ENCODE measurements at regions of chr11 and their contacts with region 1.

Region 1: GRCh38 chr11:61294717-61295595 is at the start of gene VWCE:
- DNase-seq: peak; percentile 35 to 78 (median 57)
- ATAC-seq: peak; percentile 92
- H3K4me3 ChIP-seq: peak within 1 kb of the TSS; percentile 73
- H3K4me3 Mint-ChIP-seq: peak within 1 kb of the TSS; percentile 72 to 86 (median 80)
- H3K27ac ChIP-seq: no peak within 1 kb of the TSS
- H3K27ac Mint-ChIP-seq: peak within 1 kb of the TSS in 1 of 9 donors; percentile 46
- H3K4me1 ChIP-seq: no peaks in the 10 kb centered on the region
- H3K4me1 Mint-ChIP-seq: peaks cover 15 to 40% (median 39%) of the 10 kb centered on the region in 7 donors
- H3K27me3 ChIP-seq: no peaks in the 10 kb centered on the region
- H3K27me3 Mint-ChIP-seq: peaks cover 0 to 25% (median 9%) of the 10 kb centered on the region in 5 donors
- total RNA-seq, gene VWCE: 0.16 to 3.8 (median 0.49) TPM

Region 2: GRCh38 chr11:61254403-61255025 is 40.4 kb before region 1 on chr11:
- CTCF ChIA-PET with region 1: no interaction called
- POLR2A ChIA-PET with region 1: no interaction called
- intact Hi-C with region 1: loop called in 1 of 2 experiments (anchors 1 kb)
- DNase-seq: peak; percentile 7 to 72 (median 47)
- ATAC-seq: peak; percentile 85
- H3K4me3 ChIP-seq: no peak overlapping the region
- H3K4me3 Mint-ChIP-seq: no peak overlapping the region
- H3K27ac ChIP-seq: no peak overlapping the region
- H3K27ac Mint-ChIP-seq: no peak overlapping the region
- H3K4me1 ChIP-seq: no peaks in the 10 kb centered on the region
- H3K4me1 Mint-ChIP-seq: peaks cover 0 to 3% (median 0%) of the 10 kb centered on the region in 7 donors
- H3K27me3 ChIP-seq: no peaks in the 10 kb centered on the region
- H3K27me3 Mint-ChIP-seq: peaks cover 0 to 4% (median 0%) of the 10 kb centered on the region in 5 donors